PC-3 (cell line): ENCODE measurements at regions of chr1 and their contacts with region 1.

Region 1: GRCh38 chr1:234154320-234155251 is 218.7 kb upstream of the COA6 start:
- DNase-seq: peak; percentile 92
- ATAC-seq: peak; percentile 88
- H3K4me3 ChIP-seq: no peak overlapping the region
- H3K27ac ChIP-seq: no peak overlapping the region
- H3K4me1 ChIP-seq: no peaks in the 10 kb centered on the region
- H3K27me3 ChIP-seq: no peaks in the 10 kb centered on the region
- CTCF ChIP-seq: peak; percentile 92

Region 2: DNA sequence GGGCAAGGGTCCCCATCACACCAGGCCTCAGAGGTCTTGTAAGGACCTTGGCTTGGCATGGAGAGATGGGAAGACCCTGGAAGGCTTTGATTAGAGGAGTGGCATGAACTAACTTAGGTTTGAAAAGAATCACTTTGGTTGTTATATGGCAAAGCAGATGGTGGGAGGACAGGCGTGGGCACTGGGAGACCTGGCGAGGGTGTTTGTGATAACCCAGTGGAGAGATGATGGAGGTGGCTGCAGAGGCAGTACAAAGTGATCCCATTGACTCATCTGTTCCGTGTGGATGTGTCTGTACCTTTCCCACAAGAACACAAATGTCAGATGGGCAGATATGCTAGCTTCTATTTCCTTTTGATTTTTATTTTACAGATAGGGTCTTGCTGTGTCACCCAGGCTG is 81.8 kb before region 1 on chr1:
- CTCF ChIA-PET with region 1: no interaction called
- POLR2A ChIA-PET with region 1: no interaction called
- intact Hi-C with region 1: no loop called
- DNase-seq: no peak
- ATAC-seq: no peak
- H3K4me3 ChIP-seq: no peak overlapping the region
- H3K27ac ChIP-seq: no peak overlapping the region
- H3K4me1 ChIP-seq: peaks cover 3% of the 10 kb centered on the region
- H3K27me3 ChIP-seq: no peaks in the 10 kb centered on the region
- CTCF ChIP-seq: no peak

Region 3: DNA sequence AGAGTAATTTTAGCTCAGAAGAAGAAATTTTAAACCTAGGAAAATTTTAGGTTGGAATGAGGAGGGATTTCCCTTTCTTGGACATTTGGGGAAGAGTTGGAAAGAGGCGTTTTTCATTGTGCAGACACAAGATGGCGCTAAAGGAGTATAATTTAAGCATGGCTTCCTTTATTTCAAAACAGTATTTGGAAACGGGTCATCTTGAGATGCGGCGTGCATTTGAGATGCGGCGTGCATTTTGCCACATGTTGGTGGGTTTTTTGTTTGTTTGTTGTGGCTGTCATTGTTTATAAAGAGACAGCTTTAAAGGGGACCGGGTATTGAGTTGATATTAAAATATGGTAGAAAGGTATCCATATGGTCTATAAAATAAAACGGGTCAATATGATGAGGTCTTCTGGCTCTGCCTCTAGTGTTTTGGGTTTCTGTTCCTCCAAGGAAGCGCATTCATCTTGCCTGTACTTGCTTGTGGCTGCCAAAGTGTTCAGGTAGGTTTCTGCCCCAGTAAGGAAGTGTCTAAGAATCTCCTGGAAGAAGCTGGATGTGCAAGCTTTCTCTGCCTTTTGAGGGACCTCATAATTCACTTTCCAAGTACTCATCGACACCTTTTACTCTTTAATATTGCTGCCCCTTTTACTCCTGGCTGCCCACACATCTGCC is 39.8 kb before region 1 on chr1:
- CTCF ChIA-PET with region 1: no interaction called
- POLR2A ChIA-PET with region 1: no interaction called
- intact Hi-C with region 1: loop called (anchors 5 kb)
- DNase-seq: peak; percentile 85
- ATAC-seq: peak; percentile 65
- H3K4me3 ChIP-seq: peak overlapping the region; percentile 60
- H3K27ac ChIP-seq: no peak overlapping the region
- H3K4me1 ChIP-seq: peaks cover 2% of the 10 kb centered on the region
- H3K27me3 ChIP-seq: no peaks in the 10 kb centered on the region
- CTCF ChIP-seq: peak; percentile 92

Region 4: GRCh38 chr1:234212764-234213657 is 58.4 kb after region 1 on chr1:
- CTCF ChIA-PET with region 1: no interaction called
- POLR2A ChIA-PET with region 1: no interaction called
- intact Hi-C with region 1: loop called (anchors 5 kb)
- DNase-seq: peak; percentile 73
- ATAC-seq: peak; percentile 23
- H3K4me3 ChIP-seq: no peak overlapping the region; the same call in 1 of the 2 replicates
- H3K27ac ChIP-seq: no peak overlapping the region
- H3K4me1 ChIP-seq: peaks cover 23% of the 10 kb centered on the region
- H3K27me3 ChIP-seq: no peaks in the 10 kb centered on the region
- CTCF ChIP-seq: peak; percentile 76

Region 5: GRCh38 chr1:234326497-234327366 is 172.1 kb after region 1 on chr1:
- CTCF ChIA-PET with region 1: no interaction called
- POLR2A ChIA-PET with region 1: no interaction called
- intact Hi-C with region 1: loop called (anchors 1 kb)
- DNase-seq: peak; percentile 81
- ATAC-seq: peak; percentile 94
- H3K4me3 ChIP-seq: peak overlapping the region; percentile 66
- H3K27ac ChIP-seq: no peak overlapping the region
- H3K4me1 ChIP-seq: no peaks in the 10 kb centered on the region
- H3K27me3 ChIP-seq: no peaks in the 10 kb centered on the region
- CTCF ChIP-seq: peak; percentile 96